Head of caudate nucleus (tissue), 42 donors: ENCODE measurements at regions of chr7 and their contacts with region 1.

Region 1: DNA sequence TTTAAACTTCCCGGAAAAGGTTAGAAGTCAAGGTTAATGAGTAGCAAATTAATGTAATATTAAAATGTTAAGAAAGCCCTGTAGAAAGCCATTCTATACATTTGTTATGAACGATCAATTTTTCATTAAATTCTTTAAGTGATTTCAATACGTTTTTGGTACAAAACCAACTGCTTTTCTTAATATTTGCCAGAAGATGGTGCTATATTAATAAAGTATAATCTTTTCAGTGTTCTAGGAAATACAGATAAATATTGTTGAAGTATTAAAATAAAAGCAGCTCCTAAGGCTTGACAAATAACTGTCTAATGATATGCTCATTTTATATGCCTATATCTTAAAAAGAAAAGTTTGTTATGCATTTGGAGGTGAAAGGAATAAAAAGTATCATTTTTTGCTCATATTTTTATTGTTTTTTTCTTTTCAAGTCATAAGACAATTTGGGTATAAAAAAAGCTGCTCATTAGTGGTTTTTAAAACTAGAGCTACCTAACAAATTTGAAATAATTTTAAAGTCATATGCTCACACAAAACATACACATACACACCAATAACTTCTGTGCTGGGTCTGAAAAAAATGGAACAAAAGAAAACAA is 130.3 kb upstream of the POT1 start:
- DNase-seq: no peak

Region 2: GRCh38 chr7:125668321-125669013 is 608.5 kb after region 1 on chr7:
- intact Hi-C with region 1: loop called (anchors 10 kb)
- DNase-seq: no peak